Activated CD4-positive, alpha-beta T cell treated with anti-CD3 and anti-CD28 coated beads, Interleukin-2, amount 10 ng/mL, durations not matched to agents 24 days and 14 days (primary cell): ENCODE measurements at regions of chr4 and their contacts with region 1.

Region 1: DNA sequence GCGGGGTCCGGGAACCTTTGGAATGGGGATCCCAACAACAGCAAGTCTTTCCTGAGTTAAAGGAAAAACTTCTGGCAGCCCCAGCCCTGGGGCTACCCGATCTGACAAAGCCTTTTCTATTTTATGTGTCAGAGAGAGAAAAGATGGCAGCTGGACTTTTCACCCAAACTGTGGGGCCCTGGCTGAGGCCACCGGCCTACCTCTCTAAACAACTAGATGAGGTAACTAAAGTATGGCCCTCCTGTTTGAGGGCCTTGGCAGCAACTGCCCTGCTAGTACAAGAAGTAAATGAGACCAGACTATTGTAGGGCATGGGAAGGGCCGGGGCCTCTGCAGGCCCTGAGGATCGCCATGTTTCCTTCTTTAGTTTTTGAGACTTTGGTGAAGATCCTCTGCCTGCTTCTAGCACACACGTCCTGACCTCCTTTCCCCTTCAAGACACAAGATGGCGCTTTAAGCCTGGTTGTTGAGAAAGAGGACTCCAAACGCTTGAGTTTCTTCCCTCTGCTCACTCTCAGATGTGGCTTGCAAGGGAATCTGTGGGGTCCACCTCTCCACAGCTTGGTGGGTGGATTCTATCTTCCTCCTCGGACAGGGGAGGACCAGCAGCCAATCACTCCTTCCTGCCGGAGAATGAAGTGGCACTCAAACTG is 18.5 kb upstream of the DRD5 start:
- DNase-seq: peak; percentile 87
- H3K4me3 Mint-ChIP-seq: no peak overlapping the region
- H3K27ac Mint-ChIP-seq: no peak overlapping the region
- H3K4me1 Mint-ChIP-seq: no peaks in the 10 kb centered on the region
- H3K27me3 Mint-ChIP-seq: peaks cover 13% of the 10 kb centered on the region

Region 2: DNA sequence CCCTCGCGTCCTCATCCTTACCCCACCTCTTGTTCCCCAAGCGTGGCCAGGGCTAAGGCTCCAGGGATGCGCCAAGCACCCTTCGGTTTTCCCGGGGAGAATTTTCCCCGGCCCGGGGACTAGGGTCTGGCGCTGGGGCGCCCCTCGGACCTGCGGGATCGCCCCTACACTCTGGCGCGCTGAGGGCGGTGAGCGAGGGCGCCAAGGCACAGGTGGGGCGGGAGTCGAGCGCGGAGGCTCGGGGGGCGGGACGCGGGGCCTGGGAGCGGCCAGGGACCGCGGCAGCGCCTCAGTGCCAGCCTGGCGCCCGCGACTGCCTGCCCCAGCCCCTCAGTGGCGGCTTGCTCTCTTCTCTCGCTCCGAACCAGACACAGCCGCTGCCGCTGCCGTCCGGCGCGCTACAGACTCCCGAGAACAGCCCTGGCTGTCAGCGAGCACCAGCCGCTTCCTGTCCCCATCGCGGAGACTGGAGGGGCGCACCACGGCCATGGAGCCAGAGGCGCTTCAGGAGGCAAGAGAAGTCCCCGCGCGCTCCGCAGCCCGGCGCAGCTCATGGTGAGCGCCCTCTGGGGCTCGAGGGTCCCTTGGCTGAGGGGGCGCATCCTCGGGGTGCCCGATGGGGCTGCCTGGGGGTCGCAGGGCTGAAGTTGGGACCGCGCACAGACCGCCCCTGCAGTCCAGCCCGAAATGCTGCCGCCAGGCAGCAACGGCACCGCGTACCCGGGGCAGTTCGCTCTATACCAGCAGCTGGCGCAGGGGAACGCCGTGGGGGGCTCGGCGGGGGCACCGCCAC is 18.6 kb after region 1 on chr4 and contains the start of gene DRD5:
- intact Hi-C with region 1: no loop called
- DNase-seq: no peak
- H3K4me3 Mint-ChIP-seq: no peak within 1 kb of the TSS
- H3K27ac Mint-ChIP-seq: no peak within 1 kb of the TSS
- H3K4me1 Mint-ChIP-seq: no peaks in the 10 kb centered on the region
- H3K27me3 Mint-ChIP-seq: peaks cover 53% of the 10 kb centered on the region
- total RNA-seq, gene DRD5: not detected in 2 replicates

Region 3: DNA sequence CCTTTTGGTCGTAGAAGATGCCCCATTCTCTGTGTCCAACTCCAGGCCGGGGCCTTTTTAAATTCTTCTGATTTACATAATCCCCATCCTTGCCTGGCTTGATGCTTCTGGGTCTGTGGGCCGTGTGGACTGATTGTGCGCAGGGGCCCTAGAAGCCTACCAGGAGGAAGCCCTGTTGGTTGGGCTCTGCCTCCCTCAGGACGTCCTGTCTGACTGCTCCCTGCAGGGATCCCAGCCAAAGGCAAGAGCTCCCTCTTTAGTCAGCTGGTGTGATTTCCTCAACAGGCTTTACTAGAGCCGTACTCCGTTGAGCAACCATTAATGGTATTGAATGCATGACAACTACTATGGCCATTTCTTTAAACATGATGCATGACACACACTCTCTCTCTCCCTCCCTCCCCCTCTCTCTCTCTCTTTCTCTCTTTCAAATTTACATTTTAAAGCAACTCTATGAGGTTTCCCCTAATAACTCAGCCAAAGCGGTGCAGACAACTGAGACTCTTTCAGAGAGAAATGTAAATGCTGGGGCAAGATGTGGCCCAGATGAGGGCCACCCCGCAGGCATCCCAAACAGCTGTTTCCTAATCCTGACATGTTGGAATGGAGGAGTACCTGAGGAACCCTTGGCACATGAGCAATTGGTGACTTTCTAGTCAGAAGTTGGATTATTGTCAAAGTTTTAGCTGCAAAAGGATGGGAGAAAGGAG is 135.8 kb after region 1 on chr4:
- intact Hi-C with region 1: loop called (anchors 10 kb)
- DNase-seq: no peak
- H3K4me3 Mint-ChIP-seq: no peak overlapping the region
- H3K27ac Mint-ChIP-seq: no peak overlapping the region
- H3K4me1 Mint-ChIP-seq: no peaks in the 10 kb centered on the region
- H3K27me3 Mint-ChIP-seq: peaks cover 6% of the 10 kb centered on the region

Region 4: DNA sequence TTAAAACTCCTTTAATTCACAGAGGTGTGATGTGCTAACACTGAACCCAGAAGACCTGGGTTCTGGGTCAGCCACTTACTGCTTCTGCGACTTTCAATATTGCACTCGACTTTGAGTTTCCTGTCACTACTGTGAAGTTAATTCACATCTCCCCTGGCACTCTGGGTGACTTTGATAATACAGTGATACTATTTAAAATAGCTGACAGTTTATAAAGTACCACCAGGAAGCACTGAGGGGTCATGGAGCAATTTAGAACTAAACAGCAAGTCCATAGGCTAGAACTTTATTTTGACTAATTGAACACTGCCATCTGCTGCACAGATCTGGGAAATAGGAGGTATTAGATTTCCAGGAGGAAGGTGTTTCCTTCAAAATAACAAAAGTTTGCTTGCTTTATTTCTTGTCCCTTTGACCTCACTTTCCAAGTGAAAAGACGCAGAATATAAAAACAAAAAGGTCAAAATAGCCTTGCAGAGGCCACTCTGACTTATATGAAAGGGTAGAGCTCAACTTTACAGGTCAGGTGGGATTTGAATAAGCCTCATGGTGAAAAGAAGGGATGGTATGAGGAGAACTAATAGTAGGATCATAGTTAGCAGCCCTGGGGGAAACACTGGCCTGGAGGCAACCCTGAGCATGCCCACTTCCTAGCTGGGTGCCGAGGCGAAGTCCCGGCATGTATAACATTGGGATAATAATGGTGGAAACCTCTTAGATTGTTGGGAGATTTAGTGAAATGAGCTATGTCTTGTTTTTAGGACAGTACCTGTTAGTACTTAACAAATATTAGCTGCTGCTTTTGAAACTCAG is 640.9 kb after region 1 on chr4:
- intact Hi-C with region 1: loop called (anchors 5 kb)
- DNase-seq: peak; percentile 73
- H3K4me3 Mint-ChIP-seq: no peak overlapping the region
- H3K27ac Mint-ChIP-seq: no peak overlapping the region
- H3K4me1 Mint-ChIP-seq: no peaks in the 10 kb centered on the region
- H3K27me3 Mint-ChIP-seq: no peaks in the 10 kb centered on the region

Region 5: GRCh38 chr4:10535912-10536311 is 773.0 kb after region 1 on chr4:
- intact Hi-C with region 1: loop called (anchors 5 kb)
- DNase-seq: no peak
- H3K4me3 Mint-ChIP-seq: no peak overlapping the region
- H3K27ac Mint-ChIP-seq: no peak overlapping the region
- H3K4me1 Mint-ChIP-seq: no peaks in the 10 kb centered on the region
- H3K27me3 Mint-ChIP-seq: peaks cover 9% of the 10 kb centered on the region